Transverse colon (tissue), 4 donors: ENCODE measurements at regions of chr16 and their contacts with region 1.

Region 1: DNA sequence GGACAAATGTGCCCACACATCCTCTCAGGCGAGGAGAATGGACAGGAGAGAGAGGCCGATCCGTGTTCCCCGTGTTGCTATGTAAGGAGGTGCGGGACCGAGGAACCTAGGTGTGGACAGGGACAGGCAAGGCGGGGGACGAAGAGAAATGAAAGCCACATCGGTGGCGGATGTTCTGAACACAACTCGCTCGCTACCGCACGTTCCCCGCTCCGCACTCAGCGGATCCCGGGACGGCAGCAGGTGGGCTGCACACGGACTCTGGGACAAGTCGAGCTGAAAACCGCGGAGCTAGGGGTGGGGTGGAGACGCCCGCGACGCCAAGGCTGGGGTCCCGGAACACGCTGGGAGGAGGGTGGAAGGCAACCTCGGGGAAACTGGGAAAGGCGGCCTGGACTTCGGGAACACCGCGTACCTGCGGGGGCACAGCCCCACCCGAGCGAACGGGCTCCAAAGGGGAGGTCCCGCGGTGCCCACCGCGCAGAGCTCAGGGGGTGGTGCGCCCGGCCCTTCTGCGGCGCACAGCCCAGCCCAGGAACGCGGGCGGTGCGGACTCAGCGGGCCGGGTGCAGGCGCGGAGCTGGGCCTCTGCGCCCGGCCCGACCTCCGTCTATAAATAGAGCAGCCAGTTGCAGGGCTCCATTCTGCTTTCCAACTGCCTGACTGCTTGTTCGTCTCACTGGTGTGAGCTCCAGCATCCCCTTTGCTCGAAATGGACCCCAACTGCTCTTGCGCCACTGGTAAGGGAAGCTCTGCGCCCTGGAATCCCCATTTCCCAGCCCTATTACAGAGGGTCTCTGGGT is at the start of gene MT1E:
- DNase-seq: peak; percentile 83
- H3K4me3 ChIP-seq: peak within 1 kb of the TSS; percentile 38 to 61 (median 54)
- H3K27ac ChIP-seq: peak within 1 kb of the TSS; percentile 85 to 90 (median 90)
- H3K4me1 ChIP-seq: peaks cover 0 to 22% (median 17%) of the 10 kb centered on the region in 4 donors
- H3K27me3 ChIP-seq: no peaks in the 10 kb centered on the region
- CTCF ChIP-seq: no peak
- EP300 ChIP-seq: peak; percentile 91
- POLR2A ChIP-seq: peak; percentile 97
- total RNA-seq, gene MT1E: 109 to 1,058 (median 257) TPM

Region 2: DNA sequence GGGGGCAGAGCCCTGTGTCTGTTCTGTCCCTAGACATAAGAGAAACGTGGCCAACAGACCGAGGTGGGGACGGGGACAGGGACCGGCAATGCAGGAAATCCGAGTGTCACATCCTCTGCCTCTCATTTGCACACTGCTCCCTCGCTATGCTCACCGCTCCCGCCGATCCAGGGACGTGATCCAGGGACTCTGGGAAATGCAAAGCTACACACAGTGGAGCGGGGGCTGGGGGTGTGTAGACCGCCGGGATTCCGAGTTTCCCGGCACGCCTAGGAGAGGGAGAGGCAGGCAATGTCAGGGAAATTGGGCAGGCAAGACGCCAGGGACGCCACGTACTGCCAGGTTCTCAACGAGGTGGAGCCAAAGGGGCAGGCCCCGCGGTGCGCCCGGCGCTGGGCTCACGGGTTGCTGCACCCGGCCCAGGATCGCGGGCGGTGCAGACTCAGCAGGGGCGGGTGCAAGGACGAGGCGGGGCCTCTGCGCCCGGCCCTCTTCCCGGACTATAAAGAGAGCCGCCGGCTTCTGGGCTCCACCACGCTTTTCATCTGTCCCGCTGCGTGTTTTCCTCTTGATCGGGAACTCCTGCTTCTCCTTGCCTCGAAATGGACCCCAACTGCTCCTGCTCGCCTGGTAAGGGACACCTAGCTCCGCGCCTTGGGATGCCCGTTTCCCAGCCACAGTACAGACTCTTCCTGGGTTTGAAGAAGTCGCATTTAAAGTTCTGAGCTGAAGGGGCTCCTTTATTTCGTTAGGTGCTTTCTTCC is 56.8 kb after region 1 on chr16 and contains the start of gene MT1X:
- in situ Hi-C with region 1: no loop called
- intact Hi-C with region 1: loop called (anchors 5 kb)
- DNase-seq: peak; percentile 94
- H3K4me3 ChIP-seq: peak within 1 kb of the TSS; percentile 43 to 79 (median 55)
- H3K27ac ChIP-seq: peak within 1 kb of the TSS; percentile 79 to 87 (median 82)
- H3K4me1 ChIP-seq: peaks cover 3 to 20% (median 11%) of the 10 kb centered on the region in 4 donors
- H3K27me3 ChIP-seq: no peaks in the 10 kb centered on the region
- CTCF ChIP-seq: no peak
- EP300 ChIP-seq: peak; percentile 96
- POLR2A ChIP-seq: peak; percentile 97
- total RNA-seq, gene MT1X: 40.4 to 784 (median 274) TPM